ENCODE measurements at regions of chr3 and their contacts with region 1.

Region 1: GRCh38 chr3:153161138-153161713 is 800 bp upstream of the RAP2B start:
- DNase-seq: peak; percentile 94 to 98 (median 98)
- ATAC-seq: peak; percentile 83
- H3K4me3 ChIP-seq: peak overlapping the region; percentile 88
- H3K27ac ChIP-seq: peak overlapping the region; percentile 84
- H3K4me1 ChIP-seq: peaks cover 6 to 24% of the 10 kb centered on the region in 2 experiments; a peak in 3 of 5 replicates
- H3K27me3 ChIP-seq: no peaks in the 10 kb centered on the region
- CTCF ChIP-seq: no peak
- EP300 ChIP-seq: no peak
- POLR2A ChIP-seq: no peak
- RAD21 ChIP-seq: no peak

Region 2: DNA sequence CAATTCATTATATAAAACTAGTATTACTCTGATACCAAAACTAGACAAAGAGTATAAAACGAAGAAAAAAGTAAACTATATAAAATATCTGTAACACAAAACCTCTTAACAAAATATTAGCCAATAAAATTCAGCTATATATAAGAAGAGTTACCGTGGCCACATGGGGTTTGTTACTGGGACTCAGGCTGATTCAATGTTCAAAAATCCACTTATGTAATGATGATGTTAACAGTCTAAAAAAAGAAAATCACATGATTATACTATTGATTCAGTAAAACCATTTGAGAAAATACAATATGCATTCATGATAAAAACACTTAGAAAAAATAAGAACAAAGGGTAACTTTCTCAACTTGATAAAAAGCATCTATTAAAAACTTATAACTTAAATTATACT is 308.0 kb before region 1 on chr3:
- CTCF ChIA-PET with region 1: no interaction called
- POLR2A ChIA-PET with region 1: no interaction called
- in situ Hi-C with region 1: no loop called
- intact Hi-C with region 1: no loop called
- DNase-seq: no peak
- ATAC-seq: no peak
- H3K4me3 ChIP-seq: no peak overlapping the region
- H3K27ac ChIP-seq: no peak overlapping the region
- H3K4me1 ChIP-seq: peaks cover 0 to 31% of the 10 kb centered on the region in 2 experiments; a peak in 3 of 5 replicates
- H3K27me3 ChIP-seq: no peaks in the 10 kb centered on the region
- CTCF ChIP-seq: no peak
- EP300 ChIP-seq: no peak
- POLR2A ChIP-seq: no peak
- RAD21 ChIP-seq: no peak

Region 3: GRCh38 chr3:153043729-153044328 is 117.4 kb before region 1 on chr3:
- CTCF ChIA-PET with region 1: interaction called, 6 read pairs
- POLR2A ChIA-PET with region 1: interaction called, 4 read pairs
- in situ Hi-C with region 1: loop called (anchors 5 kb)
- intact Hi-C with region 1: loop called (anchors 1 kb)
- DNase-seq: no peak
- ATAC-seq: no peak
- H3K4me3 ChIP-seq: no peak overlapping the region
- H3K27ac ChIP-seq: peak overlapping the region; percentile 4; the same call in 1 of the 3 replicates
- H3K4me1 ChIP-seq: peaks cover 4 to 5% of the 10 kb centered on the region in 2 experiments; a peak in 3 of 5 replicates
- H3K27me3 ChIP-seq: no peaks in the 10 kb centered on the region
- CTCF ChIP-seq: no peak
- EP300 ChIP-seq: no peak
- POLR2A ChIP-seq: no peak
- RAD21 ChIP-seq: no peak

Region 4: DNA sequence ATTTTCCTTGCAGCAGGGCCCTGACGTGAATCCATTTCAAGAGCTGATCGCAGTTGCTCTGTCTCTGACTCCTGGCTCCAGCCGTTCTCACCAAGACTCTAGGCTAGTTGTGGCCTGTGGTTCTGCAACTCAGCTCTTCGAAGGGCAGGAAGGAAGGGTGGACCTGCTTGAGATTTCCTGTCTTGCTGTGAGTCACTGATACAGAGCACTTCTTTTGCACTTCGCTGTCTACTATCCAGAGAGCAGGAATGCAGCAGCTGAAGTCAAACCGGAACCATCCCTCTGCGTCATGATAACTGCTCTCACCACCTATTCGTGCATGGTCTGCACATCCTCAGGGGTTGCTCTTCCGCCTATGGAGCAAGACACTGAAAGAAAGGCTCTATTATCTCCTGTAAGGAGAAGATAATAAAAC is 60.5 kb after region 1 on chr3:
- CTCF ChIA-PET with region 1: no interaction called
- POLR2A ChIA-PET with region 1: no interaction called
- in situ Hi-C with region 1: no loop called
- intact Hi-C with region 1: loop called (anchors 5 kb)
- DNase-seq: peak; percentile 23 to 90 (median 56)
- ATAC-seq: peak; percentile 98
- H3K4me3 ChIP-seq: no peak overlapping the region
- H3K27ac ChIP-seq: peak overlapping the region; percentile 74
- H3K4me1 ChIP-seq: peaks cover 0 to 15% of the 10 kb centered on the region in 2 experiments; a peak in 2 of 5 replicates
- H3K27me3 ChIP-seq: no peaks in the 10 kb centered on the region
- CTCF ChIP-seq: no peak; a peak in 1 of 6 replicates
- EP300 ChIP-seq: peak; percentile 78
- POLR2A ChIP-seq: 0 out of 2 replicates have a peak, but pooled peaks have one; percentile 46
- RAD21 ChIP-seq: no peak; a peak in 1 of 4 replicates

Region 5: GRCh38 chr3:153291056-153291685 is 129.9 kb after region 1 on chr3:
- CTCF ChIA-PET with region 1: no interaction called
- POLR2A ChIA-PET with region 1: no interaction called
- in situ Hi-C with region 1: no loop called
- intact Hi-C with region 1: loop called (anchors 1 kb)
- DNase-seq: peak; percentile 17 to 67 (median 31)
- ATAC-seq: peak; percentile 84
- H3K4me3 ChIP-seq: no peak overlapping the region
- H3K27ac ChIP-seq: no peak overlapping the region
- H3K4me1 ChIP-seq: peaks cover 0 to 21% of the 10 kb centered on the region in 2 experiments; a peak in 2 of 5 replicates
- H3K27me3 ChIP-seq: no peaks in the 10 kb centered on the region
- CTCF ChIP-seq: peak; percentile 56 to 66 (median 56)
- EP300 ChIP-seq: no peak
- POLR2A ChIP-seq: no peak
- RAD21 ChIP-seq: peak; percentile 36 to 67; a peak in 3 of 4 replicates

Region 6: DNA sequence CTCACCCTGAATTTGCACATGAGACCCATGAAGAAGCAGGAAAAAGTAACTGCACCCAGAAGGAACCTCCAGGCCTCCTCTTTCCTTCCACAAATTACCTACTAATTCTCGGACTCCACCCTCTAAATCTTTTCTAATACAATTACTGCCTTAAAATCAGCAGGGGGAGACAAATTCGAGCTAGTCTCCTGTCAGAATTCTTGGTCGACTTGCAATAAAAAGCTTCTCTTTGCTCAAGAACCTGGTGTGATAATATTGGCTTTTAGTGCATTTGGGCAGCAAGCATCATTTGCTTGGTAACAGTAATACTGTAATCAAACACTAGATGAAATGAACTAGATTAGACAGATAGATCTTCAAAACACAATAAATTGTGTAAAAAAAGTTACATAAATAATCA is 282.7 kb after region 1 on chr3:
- CTCF ChIA-PET with region 1: no interaction called
- POLR2A ChIA-PET with region 1: no interaction called
- in situ Hi-C with region 1: no loop called
- intact Hi-C with region 1: loop called (anchors 5 kb)
- DNase-seq: peak in 1 of 4 experiments; percentile 21
- ATAC-seq: no peak
- H3K4me3 ChIP-seq: no peak overlapping the region
- H3K27ac ChIP-seq: no peak overlapping the region
- H3K4me1 ChIP-seq: no peaks in the 10 kb centered on the region; a peak in 1 of 5 replicates
- H3K27me3 ChIP-seq: no peaks in the 10 kb centered on the region
- CTCF ChIP-seq: peak in 2 of 3 experiments; percentile 20 to 46; a peak in 3 of 6 replicates
- EP300 ChIP-seq: no peak
- POLR2A ChIP-seq: no peak
- RAD21 ChIP-seq: peak in 1 of 2 experiments; percentile 57; a peak in 2 of 4 replicates

Region 7: GRCh38 chr3:153595186-153595815 is 434.1 kb after region 1 on chr3:
- CTCF ChIA-PET with region 1: no interaction called
- POLR2A ChIA-PET with region 1: no interaction called
- in situ Hi-C with region 1: no loop called
- intact Hi-C with region 1: loop called (anchors 2 kb)
- DNase-seq: peak in 2 of 4 experiments; percentile 23 to 37
- ATAC-seq: peak; percentile 83
- H3K4me3 ChIP-seq: no peak overlapping the region
- H3K27ac ChIP-seq: no peak overlapping the region
- H3K4me1 ChIP-seq: no peaks in the 10 kb centered on the region
- H3K27me3 ChIP-seq: no peaks in the 10 kb centered on the region
- CTCF ChIP-seq: peak; percentile 52 to 71 (median 64)
- EP300 ChIP-seq: no peak
- POLR2A ChIP-seq: no peak
- RAD21 ChIP-seq: peak; percentile 80 to 86

Region 8: GRCh38 chr3:153768561-153769469 is 607.6 kb after region 1 on chr3:
- CTCF ChIA-PET with region 1: no interaction called
- POLR2A ChIA-PET with region 1: no interaction called
- in situ Hi-C with region 1: no loop called
- intact Hi-C with region 1: loop called (anchors 10 kb)
- DNase-seq: peak; percentile 21 to 55 (median 34)
- ATAC-seq: peak; percentile 92
- H3K4me3 ChIP-seq: no peak overlapping the region
- H3K27ac ChIP-seq: no peak overlapping the region
- H3K4me1 ChIP-seq: no peaks in the 10 kb centered on the region
- H3K27me3 ChIP-seq: no peaks in the 10 kb centered on the region
- CTCF ChIP-seq: peak; percentile 51 to 65 (median 62)
- EP300 ChIP-seq: no peak
- POLR2A ChIP-seq: no peak
- RAD21 ChIP-seq: peak; percentile 57 to 72